ENCODE measurements at regions of chr2 and their contacts with region 1.

Region 1: DNA sequence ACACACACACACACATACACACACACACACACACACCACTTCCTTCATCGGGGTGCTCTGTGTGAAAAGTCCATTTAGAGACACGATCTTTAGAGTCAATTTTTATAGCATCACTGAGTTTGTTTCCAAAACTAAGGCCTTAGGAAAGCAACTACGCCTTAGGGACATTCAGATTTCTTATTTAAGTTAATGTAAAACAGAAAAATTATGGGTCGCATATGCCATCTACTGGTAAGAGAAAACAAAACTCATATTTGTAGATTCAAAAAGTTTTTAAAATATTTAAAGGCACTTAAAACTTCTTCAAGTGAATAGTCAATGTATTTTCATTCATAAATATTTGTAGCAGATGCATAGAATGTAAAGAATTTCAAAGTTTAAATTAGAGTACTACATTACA is 166.2 kb downstream of the ATAD2B start:
- DNase-seq: no peak
- H3K4me3 Mint-ChIP-seq: no peak overlapping the region
- H3K27ac Mint-ChIP-seq: no peak overlapping the region
- H3K4me1 Mint-ChIP-seq: peaks cover 16% of the 10 kb centered on the region
- H3K27me3 Mint-ChIP-seq: no peaks in the 10 kb centered on the region
- CTCF ChIP-seq: peak; percentile 12

Region 2: GRCh38 chr2:23230885-23231284 is 529.9 kb before region 1 on chr2:
- CTCF ChIA-PET with region 1: no interaction called
- intact Hi-C with region 1: no loop called
- DNase-seq: no peak
- H3K4me3 Mint-ChIP-seq: no peak overlapping the region
- H3K27ac Mint-ChIP-seq: no peak overlapping the region
- H3K4me1 Mint-ChIP-seq: no peaks in the 10 kb centered on the region
- H3K27me3 Mint-ChIP-seq: peaks cover 10% of the 10 kb centered on the region
- CTCF ChIP-seq: no peak

Region 3: DNA sequence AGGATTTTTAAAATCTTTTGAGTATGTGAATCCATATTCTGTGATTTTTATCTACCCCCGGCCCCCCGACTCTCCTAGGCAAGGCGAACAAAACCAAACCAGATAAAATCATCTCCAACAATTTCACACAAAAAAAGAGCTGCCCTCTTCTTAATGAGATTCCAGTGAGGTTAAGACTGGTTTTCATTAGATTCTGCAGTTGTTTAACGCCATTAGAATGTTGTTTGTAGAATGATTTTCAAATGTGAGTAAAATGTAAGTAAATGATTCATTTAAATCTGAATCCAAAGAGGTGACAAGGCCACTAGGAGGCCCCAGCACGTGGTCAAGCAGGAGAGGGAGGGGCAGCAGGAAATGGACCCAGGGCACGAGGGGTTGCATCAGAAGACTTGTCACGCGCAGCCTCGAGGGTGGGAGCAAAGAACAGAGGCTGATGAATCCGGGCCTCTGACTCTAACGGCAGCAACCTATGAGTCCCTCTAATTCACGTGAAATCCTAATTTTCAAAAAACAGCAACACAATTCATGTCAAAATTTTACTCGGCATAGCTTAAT is 400.1 kb before region 1 on chr2:
- CTCF ChIA-PET with region 1: no interaction called
- intact Hi-C with region 1: loop called (anchors 10 kb)
- DNase-seq: peak; percentile 23
- H3K4me3 Mint-ChIP-seq: no peak overlapping the region
- H3K27ac Mint-ChIP-seq: no peak overlapping the region
- H3K4me1 Mint-ChIP-seq: peaks cover 13% of the 10 kb centered on the region
- H3K27me3 Mint-ChIP-seq: peaks cover 13% of the 10 kb centered on the region
- CTCF ChIP-seq: no peak

Region 4: DNA sequence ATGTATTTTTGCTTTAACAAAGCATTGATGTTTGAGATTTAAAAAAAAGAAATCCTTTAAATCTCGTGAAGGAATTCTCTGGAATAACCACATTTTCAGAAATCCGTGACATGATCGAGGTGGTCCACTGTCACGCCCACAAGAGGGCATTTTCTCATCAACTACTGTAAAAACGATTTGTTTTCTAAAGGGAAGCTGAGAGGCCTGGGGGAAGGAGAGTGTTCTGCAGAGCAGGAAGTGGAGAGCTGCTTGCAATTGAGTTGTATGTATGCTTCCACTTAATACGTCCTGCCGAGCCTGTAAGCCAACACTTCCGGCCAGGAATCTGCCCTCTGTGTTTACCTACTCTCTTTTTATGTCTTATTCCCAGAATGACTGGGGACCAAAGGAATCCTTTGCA is 356.3 kb before region 1 on chr2:
- CTCF ChIA-PET with region 1: no interaction called
- intact Hi-C with region 1: loop called (anchors 10 kb)
- DNase-seq: peak; percentile 36
- H3K4me3 Mint-ChIP-seq: peak overlapping the region; percentile 49
- H3K27ac Mint-ChIP-seq: peak overlapping the region; percentile 5
- H3K4me1 Mint-ChIP-seq: peaks cover 31% of the 10 kb centered on the region
- H3K27me3 Mint-ChIP-seq: no peaks in the 10 kb centered on the region
- CTCF ChIP-seq: no peak

Region 5: GRCh38 chr2:23673830-23674679 is 86.7 kb before region 1 on chr2:
- CTCF ChIA-PET with region 1: no interaction called
- intact Hi-C with region 1: no loop called
- DNase-seq: no peak
- H3K4me3 Mint-ChIP-seq: no peak overlapping the region
- H3K27ac Mint-ChIP-seq: no peak overlapping the region
- H3K4me1 Mint-ChIP-seq: no peaks in the 10 kb centered on the region
- H3K27me3 Mint-ChIP-seq: no peaks in the 10 kb centered on the region
- CTCF ChIP-seq: no peak